ENCODE measurements at regions of chr2 and their contacts with region 1.

Region 1: GRCh38 chr2:7044261-7045250 is 127.3 kb downstream of the RNF144A start:
- DNase-seq: peak; percentile 15
- ATAC-seq: peak; percentile 86
- H3K4me3 ChIP-seq: no peak overlapping the region
- H3K27ac ChIP-seq: no peak overlapping the region
- H3K4me1 ChIP-seq: no peaks in the 10 kb centered on the region
- H3K27me3 ChIP-seq: no peaks in the 10 kb centered on the region
- CTCF ChIP-seq: peak; percentile 65 to 98 (median 96)
- POLR2A ChIP-seq: no peak
- RAD21 ChIP-seq: peak; percentile 54

Region 2: GRCh38 chr2:6826081-6826913 is 218.3 kb before region 1 on chr2:
- CTCF ChIA-PET with region 1: no interaction called
- POLR2A ChIA-PET with region 1: no interaction called
- RAD21 ChIA-PET with region 1: no interaction called
- intact Hi-C with region 1: loop called (anchors 10 kb)
- DNase-seq: peak; percentile 71
- ATAC-seq: peak; percentile 93
- H3K4me3 ChIP-seq: no peak overlapping the region
- H3K27ac ChIP-seq: no peak overlapping the region
- H3K4me1 ChIP-seq: peaks cover 0 to 8% of the 10 kb centered on the region in 2 experiments; a peak in 2 of 4 replicates
- H3K27me3 ChIP-seq: peaks cover 10% of the 10 kb centered on the region; the same call in 1 of the 2 replicates
- CTCF ChIP-seq: peak; percentile 67 to 87 (median 78); a peak in 5 of 6 replicates
- POLR2A ChIP-seq: no peak
- RAD21 ChIP-seq: peak; percentile 75

Region 3: DNA sequence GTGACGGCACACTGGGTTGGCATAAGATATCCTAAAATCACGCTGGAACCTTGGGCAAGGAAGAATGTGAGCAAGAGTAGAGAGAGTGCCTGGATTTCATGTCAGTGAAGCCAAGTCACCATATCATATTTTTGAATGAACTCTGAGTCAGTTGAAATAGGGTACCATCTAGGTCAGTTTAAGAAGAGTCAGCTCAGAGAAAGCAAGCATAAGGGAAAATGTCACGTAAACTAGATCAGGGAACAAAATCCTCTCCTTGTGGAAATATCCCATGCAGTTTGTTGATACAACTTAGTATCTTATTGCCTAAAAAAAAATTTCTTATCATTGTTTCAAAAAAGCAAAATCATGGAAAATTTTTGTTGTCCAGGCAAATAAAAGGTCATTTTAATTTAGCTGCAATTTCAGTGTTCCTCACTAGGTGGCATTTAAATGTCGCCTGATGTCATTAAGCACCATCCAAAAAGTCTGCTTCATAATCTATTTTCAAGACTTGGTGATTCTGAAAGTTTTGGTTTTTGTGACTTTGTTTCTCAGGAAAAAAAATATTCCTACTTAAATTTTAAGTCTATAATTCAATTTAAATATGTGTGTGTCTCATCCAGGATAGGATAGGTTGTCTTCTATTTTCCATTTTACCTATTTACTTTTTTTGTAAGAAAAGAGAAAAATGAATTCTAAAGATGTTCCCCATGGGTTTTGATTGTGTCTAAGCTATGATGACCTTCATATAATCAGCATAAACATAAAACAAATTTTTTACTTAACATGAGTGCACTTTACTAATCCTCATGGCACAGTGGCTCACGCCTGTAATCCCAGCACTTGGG is 147.4 kb before region 1 on chr2:
- CTCF ChIA-PET with region 1: interaction called, 22 read pairs
- POLR2A ChIA-PET with region 1: no interaction called
- RAD21 ChIA-PET with region 1: no interaction called
- intact Hi-C with region 1: loop called (anchors 1 kb)
- DNase-seq: peak; percentile 26
- ATAC-seq: 0 out of 2 replicates have a peak, but pooled peaks have one; percentile 53
- H3K4me3 ChIP-seq: no peak overlapping the region
- H3K27ac ChIP-seq: no peak overlapping the region
- H3K4me1 ChIP-seq: no peaks in the 10 kb centered on the region
- H3K27me3 ChIP-seq: peaks cover 5% of the 10 kb centered on the region; the same call in 1 of the 2 replicates
- CTCF ChIP-seq: peak; percentile 47 to 80 (median 59); a peak in 5 of 6 replicates
- POLR2A ChIP-seq: no peak
- RAD21 ChIP-seq: peak; percentile 81

Region 4: GRCh38 chr2:6917071-6917760 is 127.3 kb before region 1 on chr2 and contains the start of gene RNF144A:
- CTCF ChIA-PET with region 1: interaction called, 4 read pairs
- POLR2A ChIA-PET with region 1: no interaction called
- RAD21 ChIA-PET with region 1: no interaction called
- intact Hi-C with region 1: loop called (anchors 5 kb)
- DNase-seq: no peak
- ATAC-seq: peak; percentile 90
- H3K4me3 ChIP-seq: peak within 1 kb of the TSS; percentile 36 to 49
- H3K27ac ChIP-seq: peak within 1 kb of the TSS; percentile 59; the same call in 1 of the 2 replicates
- H3K4me1 ChIP-seq: peaks cover 11 to 35% of the 10 kb centered on the region in 2 experiments; a peak in 3 of 4 replicates
- H3K27me3 ChIP-seq: no peaks in the 10 kb centered on the region
- CTCF ChIP-seq: peak in 2 of 3 experiments; percentile 29 to 35; a peak in 2 of 6 replicates
- POLR2A ChIP-seq: no peak
- RAD21 ChIP-seq: no peak
- total RNA-seq, gene RNF144A: 13.0 TPM

Measured in HCT116 (cell line).